ENCODE measurements at regions of chr11 and their contacts with region 1.

Region 1: GRCh38 chr11:116787786-116788486 is at the start of gene ZPR1:
- DNase-seq: peak; percentile 37
- ATAC-seq: peak; percentile 55
- H3K4me3 ChIP-seq: peak within 1 kb of the TSS; percentile 79 to 90 (median 86)
- H3K27ac ChIP-seq: peak within 1 kb of the TSS; percentile 61
- H3K4me1 ChIP-seq: peaks cover 58% of the 10 kb centered on the region
- H3K27me3 ChIP-seq: no peaks in the 10 kb centered on the region; a peak in 1 of 5 replicates
- CTCF ChIP-seq: no peak
- EP300 ChIP-seq: no peak
- POLR2A ChIP-seq: peak; percentile 58 to 71; a peak in 3 of 4 replicates
- RAD21 ChIP-seq: no peak
- total RNA-seq, gene ZPR1: 79.3 and 102 TPM in 2 replicates

Region 2: DNA sequence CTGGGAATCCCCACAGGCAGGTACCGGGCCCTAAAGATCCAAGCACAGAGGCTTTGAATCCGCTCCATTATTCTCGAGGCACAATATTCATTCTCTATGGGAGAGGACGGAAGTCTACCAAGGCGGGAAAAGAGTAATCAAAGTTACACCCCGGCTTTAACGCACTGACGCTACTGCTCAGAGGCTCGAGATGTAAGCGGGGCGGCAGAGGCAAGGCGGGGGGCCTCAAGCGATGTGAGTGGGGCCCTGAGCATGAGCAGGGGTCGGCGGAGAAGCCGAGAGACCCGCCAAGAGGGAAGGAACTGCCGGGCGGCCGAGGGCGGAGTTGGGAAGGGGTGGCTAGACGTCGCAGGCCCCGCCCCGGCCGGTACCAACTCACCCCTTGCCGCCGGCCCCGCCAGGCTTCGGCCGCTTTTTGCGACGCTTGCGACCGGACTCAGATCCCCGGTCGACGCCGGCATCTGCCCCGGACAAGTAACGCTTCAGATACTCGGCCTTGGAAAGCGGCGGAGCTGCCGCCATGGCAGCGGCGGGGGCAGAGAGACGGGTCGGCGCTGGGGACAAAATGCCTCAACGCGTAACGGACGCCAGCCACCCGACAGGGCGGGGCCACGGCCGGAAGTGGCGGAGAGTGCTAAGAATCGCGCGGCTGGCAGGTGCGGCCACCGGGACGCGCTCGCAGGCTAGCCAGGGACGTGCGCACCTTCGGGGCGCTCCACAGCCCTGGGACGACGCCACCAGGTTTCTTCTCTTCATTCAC is 15.3 kb before region 1 on chr11 and contains the start of gene BUD13:
- CTCF ChIA-PET with region 1: no interaction called
- POLR2A ChIA-PET with region 1: interaction called, 78 read pairs
- in situ Hi-C with region 1: no loop called
- intact Hi-C with region 1: no loop called
- DNase-seq: peak; percentile 78
- ATAC-seq: peak; percentile 95
- H3K4me3 ChIP-seq: peak within 1 kb of the TSS; percentile 89 to 98 (median 92)
- H3K27ac ChIP-seq: peak within 1 kb of the TSS; percentile 75
- H3K4me1 ChIP-seq: peaks cover 42% of the 10 kb centered on the region
- H3K27me3 ChIP-seq: no peaks in the 10 kb centered on the region
- CTCF ChIP-seq: peak; percentile 61
- EP300 ChIP-seq: no peak; a peak in 1 of 4 replicates
- POLR2A ChIP-seq: peak; percentile 76 to 92
- RAD21 ChIP-seq: peak; percentile 43
- total RNA-seq, gene BUD13: 25.9 and 31.9 TPM in 2 replicates

Region 3: GRCh38 chr11:116808386-116809194 is 20.7 kb after region 1 on chr11:
- CTCF ChIA-PET with region 1: no interaction called
- POLR2A ChIA-PET with region 1: interaction called, 291 read pairs
- in situ Hi-C with region 1: no loop called
- intact Hi-C with region 1: loop called (anchors 1 kb)
- DNase-seq: peak; percentile 98
- ATAC-seq: peak; percentile 90
- H3K4me3 ChIP-seq: peak overlapping the region; percentile 20 to 62 (median 31); a peak in 5 of 6 replicates
- H3K27ac ChIP-seq: peak overlapping the region; percentile 98
- H3K4me1 ChIP-seq: peaks cover 87% of the 10 kb centered on the region
- H3K27me3 ChIP-seq: no peaks in the 10 kb centered on the region
- CTCF ChIP-seq: no peak
- EP300 ChIP-seq: peak; percentile 97 to 99
- POLR2A ChIP-seq: peak; percentile 68 to 82; a peak in 2 of 4 replicates
- RAD21 ChIP-seq: no peak

Region 4: DNA sequence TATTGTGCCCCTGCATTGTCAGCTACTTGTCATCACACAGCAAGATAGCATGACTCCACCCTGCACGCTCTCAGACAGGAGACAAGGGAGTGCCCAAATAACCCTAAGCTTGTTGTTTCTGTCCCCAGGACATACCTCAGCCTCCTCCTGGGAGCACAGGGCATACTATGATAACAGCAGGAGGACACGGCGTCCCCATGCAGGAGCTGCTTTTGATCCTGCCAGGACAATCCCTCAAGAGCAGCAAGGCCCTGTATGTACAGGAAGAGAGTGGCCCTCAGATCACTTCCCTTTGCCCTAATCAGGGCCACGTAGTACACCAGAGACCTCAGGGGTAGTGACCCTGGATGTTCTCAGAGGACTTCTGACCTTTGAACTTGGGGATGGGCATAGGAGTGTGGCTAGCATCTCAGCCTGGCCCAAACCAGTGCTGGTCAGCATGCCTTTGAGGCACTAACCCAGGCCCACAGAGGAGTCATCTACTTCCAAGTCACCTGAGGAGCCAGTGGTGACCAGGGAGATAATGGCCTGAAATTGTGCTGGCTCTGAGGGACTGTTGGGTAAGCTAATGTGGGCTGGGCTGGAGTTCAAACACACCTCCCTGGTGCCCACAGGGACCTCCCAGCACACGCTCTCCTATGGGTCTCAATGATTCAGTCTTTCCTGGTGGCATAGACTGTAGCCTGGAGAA is 26.0 kb after region 1 on chr11:
- CTCF ChIA-PET with region 1: no interaction called
- POLR2A ChIA-PET with region 1: interaction called, 291 read pairs
- in situ Hi-C with region 1: no loop called
- intact Hi-C with region 1: no loop called
- DNase-seq: peak; percentile 50
- ATAC-seq: peak; percentile 77
- H3K4me3 ChIP-seq: no peak overlapping the region; a peak in 1 of 6 replicates
- H3K27ac ChIP-seq: peak overlapping the region; percentile 70
- H3K4me1 ChIP-seq: peaks cover 83% of the 10 kb centered on the region
- H3K27me3 ChIP-seq: no peaks in the 10 kb centered on the region
- CTCF ChIP-seq: no peak
- EP300 ChIP-seq: peak in 1 of 2 experiments; percentile 25; a peak in 2 of 4 replicates
- POLR2A ChIP-seq: peak in 1 of 2 experiments; percentile 24; a peak in 1 of 4 replicates
- RAD21 ChIP-seq: no peak

Region 5: DNA sequence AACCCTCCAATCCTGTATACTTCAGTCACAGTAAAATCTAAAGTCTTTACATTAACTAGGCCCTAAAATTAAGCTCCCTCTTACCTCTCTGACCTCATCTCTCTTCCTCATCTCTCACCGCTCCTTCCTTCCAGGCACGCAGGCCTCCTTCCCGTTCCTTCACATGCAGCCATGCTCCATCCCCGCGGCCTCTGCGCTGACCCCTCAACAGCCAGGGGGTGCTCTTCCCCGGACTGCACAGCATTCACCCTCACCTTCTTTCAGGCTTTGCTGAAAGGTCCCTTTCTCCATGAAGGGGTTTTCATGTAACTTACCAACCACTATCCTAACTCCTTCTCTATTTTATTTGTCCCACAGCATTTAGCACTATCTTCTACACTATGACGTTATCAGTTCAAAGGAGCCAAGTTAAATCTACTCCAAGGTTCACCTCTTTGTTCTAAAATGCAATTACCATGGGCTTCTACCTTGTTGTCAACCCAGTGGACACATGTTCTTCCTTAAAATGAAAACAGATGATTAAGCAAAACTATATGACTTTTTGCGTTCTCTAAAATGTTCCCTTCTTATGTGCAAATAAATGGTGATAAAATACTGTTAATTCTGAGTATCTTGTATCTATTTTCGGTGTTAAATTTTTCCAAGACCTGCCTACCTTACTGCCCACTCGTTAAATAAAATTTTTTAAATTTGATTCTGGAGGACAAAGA is 107.3 kb after region 1 on chr11:
- CTCF ChIA-PET with region 1: no interaction called
- POLR2A ChIA-PET with region 1: no interaction called
- in situ Hi-C with region 1: no loop called
- intact Hi-C with region 1: no loop called
- DNase-seq: no peak
- ATAC-seq: peak; percentile 66
- H3K4me3 ChIP-seq: no peak overlapping the region
- H3K27ac ChIP-seq: no peak overlapping the region
- H3K4me1 ChIP-seq: peaks cover 2% of the 10 kb centered on the region
- H3K27me3 ChIP-seq: no peaks in the 10 kb centered on the region
- CTCF ChIP-seq: peak; percentile 62
- EP300 ChIP-seq: no peak
- POLR2A ChIP-seq: no peak
- RAD21 ChIP-seq: no peak